ENCODE measurements at regions of chr1 and their contacts with region 1.

Region 1: DNA sequence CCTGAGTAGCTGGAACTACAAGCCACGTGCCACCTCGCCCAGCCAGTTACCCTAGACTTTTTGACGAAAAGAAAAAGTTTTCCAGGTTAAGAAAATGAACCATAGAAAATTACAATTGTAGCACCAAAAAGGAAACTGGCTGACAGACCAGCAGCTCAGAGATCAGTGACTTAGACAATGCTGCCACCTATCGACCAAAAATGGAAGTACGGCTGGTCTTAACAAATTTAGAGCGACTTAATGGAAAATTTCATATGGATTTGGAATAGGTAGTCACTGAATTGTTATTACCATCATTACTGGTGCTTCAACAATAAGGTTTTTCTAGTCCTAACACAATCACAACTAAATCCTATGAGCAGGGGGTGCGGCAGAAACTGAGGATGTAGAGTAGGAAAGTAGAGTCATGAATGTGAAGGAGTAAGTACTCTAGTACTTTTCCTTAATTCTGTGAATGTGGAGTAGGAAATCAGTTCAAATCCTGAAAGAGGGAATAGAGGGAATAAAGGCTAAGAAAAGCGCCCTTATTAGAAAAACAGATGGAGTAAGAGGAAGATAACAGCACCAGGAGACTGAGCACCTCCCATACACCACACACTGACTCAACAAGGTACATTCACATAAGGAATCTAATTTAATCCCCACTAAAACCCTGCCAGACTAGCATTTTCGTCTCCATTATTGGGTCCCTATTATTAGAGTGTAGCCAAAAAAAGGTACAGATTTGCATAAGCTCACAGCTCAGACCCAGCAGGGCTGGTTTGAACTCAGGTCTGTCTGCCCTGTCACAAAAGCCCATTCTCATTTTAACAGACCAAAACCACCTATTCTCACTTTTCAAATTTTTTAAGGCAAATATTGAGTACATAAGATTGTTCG is 37.9 kb upstream of the MGST3 start:
- DNase-seq: peak in 5 of 6 donors; percentile 46 to 83 (median 66)
- ATAC-seq: peak; percentile 51 to 85 (median 75)
- H3K4me3 ChIP-seq: no peak overlapping the region
- H3K27ac ChIP-seq: no peak overlapping the region
- H3K4me1 ChIP-seq: no peaks in the 10 kb centered on the region
- H3K27me3 ChIP-seq: peaks cover 0 to 10% (median 5%) of the 10 kb centered on the region in 4 donors
- CTCF ChIP-seq: peak; percentile 79 to 92 (median 89)

Region 2: GRCh38 chr1:165397944-165398343 is 195.2 kb before region 1 on chr1:
- intact Hi-C with region 1: loop called (anchors 5 kb)
- DNase-seq: no peak
- ATAC-seq: peak in 3 of 4 donors; percentile 64 to 83 (median 78)
- H3K4me3 ChIP-seq: no peak overlapping the region
- H3K27ac ChIP-seq: no peak overlapping the region
- H3K4me1 ChIP-seq: no peaks in the 10 kb centered on the region
- H3K27me3 ChIP-seq: no peaks in the 10 kb centered on the region
- CTCF ChIP-seq: no peak

Region 3: GRCh38 chr1:165403835-165404482 is 189.2 kb before region 1 on chr1:
- intact Hi-C with region 1: loop called in 2 of 3 experiments (anchors 5 kb)
- DNase-seq: peak in 1 of 6 donors; percentile 29
- ATAC-seq: peak in 3 of 4 donors; percentile 78 to 86 (median 85)
- H3K4me3 ChIP-seq: no peak overlapping the region
- H3K27ac ChIP-seq: no peak overlapping the region
- H3K4me1 ChIP-seq: no peaks in the 10 kb centered on the region
- H3K27me3 ChIP-seq: no peaks in the 10 kb centered on the region
- CTCF ChIP-seq: peak in 2 of 4 donors; percentile 33 to 34

Measured in pancreas (tissue), 10 donors.